Posterior cingulate gyrus (tissue), 11 donors: ENCODE measurements at regions of chr14 and their contacts with region 1.

Region 1: GRCh38 chr14:80055667-80056496 is 155.4 kb downstream of the DIO2 start:
- DNase-seq: peak in 7 of 10 donors; percentile 11 to 84 (median 47)

Region 2: GRCh38 chr14:80208426-80208950 is 152.6 kb after region 1 on chr14:
- intact Hi-C with region 1: loop called (anchors 5 kb)
- DNase-seq: no peak

Region 3: DNA sequence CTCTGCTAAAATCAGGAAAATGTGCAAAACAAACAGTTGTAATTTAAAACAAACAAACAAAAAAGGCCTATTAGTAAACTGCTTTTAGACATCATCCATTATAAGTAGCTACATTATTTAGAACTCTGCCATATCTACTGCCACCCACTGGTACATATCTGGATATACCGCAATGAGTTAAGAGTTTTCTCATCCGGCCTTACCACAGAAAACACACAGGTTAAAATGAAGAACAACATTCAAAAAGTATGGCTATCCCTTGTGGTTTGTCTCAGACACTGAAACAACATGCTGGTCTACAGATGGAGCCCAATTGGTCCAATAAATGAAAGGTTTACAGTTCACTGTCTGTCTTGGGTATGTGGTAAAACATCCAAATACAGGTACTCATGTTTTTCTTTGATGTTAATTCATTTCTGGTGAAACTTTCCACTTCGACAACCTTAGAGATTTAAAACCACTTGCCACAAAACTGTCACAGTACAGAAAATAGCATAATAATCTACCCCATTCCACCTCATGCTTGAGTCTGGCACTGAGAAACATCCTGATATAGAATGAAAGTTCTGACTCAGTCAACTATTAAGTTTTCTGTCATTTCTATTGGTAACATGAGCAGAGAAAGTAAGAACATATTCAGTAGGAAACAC is 531.3 kb after region 1 on chr14:
- intact Hi-C with region 1: loop called (anchors 1 kb)
- DNase-seq: no peak

Region 4: GRCh38 chr14:80784820-80785219 is 728.9 kb after region 1 on chr14:
- intact Hi-C with region 1: loop called (anchors 5 kb)
- DNase-seq: peak in 2 of 10 donors; percentile 2 to 13

Region 5: DNA sequence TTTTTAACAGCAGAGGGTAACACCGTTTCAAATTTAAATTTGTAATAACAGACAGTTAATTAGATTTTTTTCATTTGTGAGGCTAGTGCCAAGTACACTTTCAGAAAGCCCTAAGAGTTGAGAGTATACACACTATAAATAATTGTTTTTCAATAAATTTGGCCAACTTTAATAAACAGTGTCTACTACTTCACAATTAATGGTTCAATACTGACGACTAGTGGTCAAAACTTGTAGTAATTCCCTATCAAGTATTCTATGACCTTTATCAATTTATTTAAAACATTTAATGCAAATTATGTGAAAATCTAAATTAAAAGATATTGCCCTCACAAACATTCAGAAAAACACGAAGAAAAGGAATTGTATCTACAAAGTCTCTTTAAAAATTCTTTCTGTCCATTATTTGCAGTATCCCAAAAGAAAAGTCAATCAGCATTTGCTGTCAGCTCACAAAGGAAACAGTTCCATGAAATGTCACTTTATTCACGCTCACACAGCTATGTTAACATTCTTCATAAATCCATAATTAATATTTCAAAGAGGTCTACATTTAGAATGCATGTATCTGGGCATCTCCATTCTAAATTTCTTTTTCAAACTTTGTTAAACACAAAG is 794.4 kb after region 1 on chr14:
- intact Hi-C with region 1: loop called (anchors 1 kb)
- DNase-seq: no peak